GM13977 (cell line): ENCODE measurements at regions of chrX and their contacts with region 1.

Region 1: DNA sequence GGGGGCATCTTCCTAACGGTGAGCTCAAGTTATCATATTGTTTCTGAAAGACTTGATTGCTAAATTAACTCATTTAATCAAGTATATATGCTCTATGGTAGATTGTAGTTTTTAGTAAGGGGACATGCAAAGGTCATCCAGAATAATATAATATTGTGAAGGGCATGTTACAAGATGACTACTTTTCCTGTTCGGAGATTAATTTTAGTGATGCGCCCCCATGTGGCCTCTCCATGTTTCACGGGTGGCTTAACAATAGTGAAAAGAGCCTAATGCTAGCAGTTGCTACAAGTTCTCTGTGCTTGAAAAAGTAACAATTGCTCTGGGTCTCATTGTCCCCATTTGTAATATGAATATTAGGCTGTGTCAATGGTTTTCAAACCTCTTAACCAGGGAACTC is 12.2 kb downstream of the SMPX start:
- DNase-seq: peak; percentile 11
- CTCF ChIP-seq: peak; percentile 66

Region 2: DNA sequence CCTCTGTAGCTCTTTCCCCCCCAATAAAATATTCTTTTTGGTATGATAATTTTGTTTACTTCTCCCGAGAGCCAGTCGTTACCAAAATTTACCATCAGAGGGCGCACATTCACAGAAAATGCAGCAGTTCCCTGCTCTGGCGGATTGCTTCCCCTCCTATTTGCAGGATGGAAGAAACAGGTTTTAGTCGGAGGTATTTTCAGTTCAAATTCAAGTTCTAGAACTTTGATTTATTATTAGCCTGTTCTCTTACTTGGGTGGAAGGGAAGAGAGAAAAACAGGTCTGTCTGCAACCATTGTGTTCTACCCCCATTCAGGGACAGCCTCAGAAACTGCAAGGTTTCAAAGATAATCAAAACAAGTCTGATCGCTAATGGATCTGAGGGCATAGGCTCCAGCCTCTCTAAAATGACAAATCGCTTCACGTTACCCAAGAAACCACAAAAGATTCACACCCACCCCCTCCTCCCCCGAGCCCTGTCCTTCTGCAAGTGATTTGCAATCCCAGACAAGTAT is 1215.3 kb before region 1 on chrX:
- in situ Hi-C with region 1: loop called (anchors 25 kb)
- DNase-seq: peak; percentile 14
- CTCF ChIP-seq: peak; percentile 82